AG04449 (cell line): ENCODE measurements at regions of chr1 and their contacts with region 1.

Region 1: GRCh38 chr1:78607334-78607927 is 12.8 kb upstream of the IFI44L start:
- DNase-seq: no peak
- H3K4me3 ChIP-seq: no peak overlapping the region
- CTCF ChIP-seq: peak; percentile 23

Region 2: GRCh38 chr1:78126506-78126905 is 480.9 kb before region 1 on chr1:
- CTCF ChIA-PET with region 1: interaction called, 160 read pairs
- POLR2A ChIA-PET with region 1: no interaction called
- DNase-seq: no peak
- H3K4me3 ChIP-seq: no peak overlapping the region
- CTCF ChIP-seq: no peak

Region 3: GRCh38 chr1:78132174-78132947 is 475.1 kb before region 1 on chr1:
- CTCF ChIA-PET with region 1: interaction called, 160 read pairs
- POLR2A ChIA-PET with region 1: no interaction called
- DNase-seq: no peak
- H3K4me3 ChIP-seq: no peak overlapping the region
- CTCF ChIP-seq: no peak

Region 4: GRCh38 chr1:78156805-78157521 is 450.5 kb before region 1 on chr1:
- CTCF ChIA-PET with region 1: interaction called, 10 read pairs
- POLR2A ChIA-PET with region 1: no interaction called
- DNase-seq: peak; percentile 80
- H3K4me3 ChIP-seq: no peak overlapping the region
- CTCF ChIP-seq: no peak

Region 5: DNA sequence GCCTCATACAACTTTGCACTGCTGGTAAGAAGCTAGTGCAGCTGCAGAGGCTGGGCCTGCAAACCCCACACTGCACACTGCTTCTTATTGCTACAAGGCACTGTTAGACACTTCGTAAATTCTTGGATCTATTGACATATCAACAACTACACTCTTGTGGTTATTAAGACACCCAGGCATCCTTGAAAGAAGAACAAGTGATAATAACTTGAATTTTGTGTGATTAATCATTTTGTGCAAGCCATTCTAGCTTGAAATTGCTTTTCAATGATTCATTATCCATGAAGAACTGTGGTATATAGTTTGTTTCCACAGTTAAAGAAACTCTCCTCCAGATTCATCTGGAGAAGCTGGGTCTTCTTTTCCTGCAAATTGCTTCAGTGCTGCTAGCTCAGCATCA is 20.9 kb before region 1 on chr1:
- CTCF ChIA-PET with region 1: interaction called, 16 read pairs
- POLR2A ChIA-PET with region 1: interaction called, 4 read pairs
- DNase-seq: peak; percentile 71
- H3K4me3 ChIP-seq: no peak overlapping the region
- CTCF ChIP-seq: no peak

Region 6: GRCh38 chr1:79113836-79114235 is 506.4 kb after region 1 on chr1:
- CTCF ChIA-PET with region 1: no interaction called
- POLR2A ChIA-PET with region 1: no interaction called
- DNase-seq: no peak
- H3K4me3 ChIP-seq: no peak overlapping the region
- CTCF ChIP-seq: no peak